A673 (cell line): ENCODE measurements at regions of chr4 and their contacts with region 1.

Region 1: GRCh38 chr4:128565565-128566186 is 243.8 kb upstream of the JADE1 start:
- DNase-seq: peak; percentile 51
- H3K4me3 ChIP-seq: no peak overlapping the region
- H3K27ac ChIP-seq: no peak overlapping the region
- H3K4me1 ChIP-seq: no peaks in the 10 kb centered on the region
- H3K27me3 ChIP-seq: no peaks in the 10 kb centered on the region
- CTCF ChIP-seq: peak; percentile 58

Region 2: GRCh38 chr4:128427832-128428366 is 137.8 kb before region 1 on chr4:
- CTCF ChIA-PET with region 1: no interaction called
- POLR2A ChIA-PET with region 1: interaction called, 17 read pairs
- intact Hi-C with region 1: no loop called
- DNase-seq: peak; percentile 64
- H3K4me3 ChIP-seq: no peak overlapping the region
- H3K27ac ChIP-seq: no peak overlapping the region
- H3K4me1 ChIP-seq: no peaks in the 10 kb centered on the region
- H3K27me3 ChIP-seq: no peaks in the 10 kb centered on the region
- CTCF ChIP-seq: peak; percentile 59

Region 3: GRCh38 chr4:128718768-128719167 is 153.1 kb after region 1 on chr4:
- CTCF ChIA-PET with region 1: no interaction called
- POLR2A ChIA-PET with region 1: no interaction called
- intact Hi-C with region 1: no loop called
- DNase-seq: peak; percentile 34
- H3K4me3 ChIP-seq: no peak overlapping the region
- H3K27ac ChIP-seq: no peak overlapping the region
- H3K4me1 ChIP-seq: no peaks in the 10 kb centered on the region
- H3K27me3 ChIP-seq: no peaks in the 10 kb centered on the region
- CTCF ChIP-seq: no peak